ENCODE measurements at regions of chr12 and their contacts with region 1.

Region 1: GRCh38 chr12:117857632-117858612 is 110.9 kb downstream of the KSR2 start:
- DNase-seq: peak; percentile 25
- ATAC-seq: peak; percentile 82
- H3K4me3 ChIP-seq: no peak overlapping the region
- H3K27ac ChIP-seq: no peak overlapping the region
- H3K4me1 ChIP-seq: no peaks in the 10 kb centered on the region
- H3K27me3 ChIP-seq: no peaks in the 10 kb centered on the region; a peak in 1 of 4 replicates
- CTCF ChIP-seq: peak; percentile 55 to 79 (median 65)
- EP300 ChIP-seq: no peak
- POLR2A ChIP-seq: no peak
- RAD21 ChIP-seq: 0 out of 2 replicates have a peak, but pooled peaks have one; percentile 21

Region 2: DNA sequence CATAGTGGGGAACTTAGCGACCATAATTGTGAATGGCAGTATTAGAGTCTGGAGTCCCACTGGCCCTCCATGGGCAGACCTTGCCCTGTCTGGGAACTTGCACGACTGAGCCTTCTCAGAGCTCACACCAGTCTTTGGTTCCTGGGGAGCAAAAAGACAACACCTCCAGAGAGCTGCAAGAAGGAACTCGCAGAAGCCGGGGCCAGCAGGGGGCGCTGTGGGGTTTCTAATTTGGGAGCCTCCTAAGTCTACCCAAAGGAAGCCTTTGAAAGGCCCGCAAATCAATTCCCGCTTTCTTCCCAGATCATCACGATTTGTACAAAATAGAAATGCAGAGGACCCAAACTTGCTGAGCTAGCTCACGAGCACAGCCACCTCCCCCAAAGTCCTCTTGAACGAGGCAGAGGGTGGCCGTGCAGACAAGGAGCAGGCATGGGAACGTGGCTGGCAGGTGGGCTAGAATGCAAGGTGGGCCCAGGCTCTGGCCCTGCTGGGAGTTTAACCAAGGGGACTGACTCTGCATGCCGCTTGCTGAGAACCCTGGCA is 621.4 kb before region 1 on chr12:
- CTCF ChIA-PET with region 1: interaction called, 12 read pairs
- POLR2A ChIA-PET with region 1: no interaction called
- RAD21 ChIA-PET with region 1: interaction called, 5 read pairs
- SMC1A ChIA-PET with region 1: no interaction called
- in situ Hi-C with region 1: no loop called
- intact Hi-C with region 1: no loop called
- DNase-seq: no peak
- ATAC-seq: peak; percentile 89
- H3K4me3 ChIP-seq: no peak overlapping the region
- H3K27ac ChIP-seq: no peak overlapping the region
- H3K4me1 ChIP-seq: no peaks in the 10 kb centered on the region
- H3K27me3 ChIP-seq: peaks cover 3 to 6% of the 10 kb centered on the region in 2 experiments; a peak in 3 of 4 replicates
- CTCF ChIP-seq: peak; percentile 70 to 84 (median 78)
- EP300 ChIP-seq: no peak
- POLR2A ChIP-seq: no peak
- RAD21 ChIP-seq: peak; percentile 60

Region 3: DNA sequence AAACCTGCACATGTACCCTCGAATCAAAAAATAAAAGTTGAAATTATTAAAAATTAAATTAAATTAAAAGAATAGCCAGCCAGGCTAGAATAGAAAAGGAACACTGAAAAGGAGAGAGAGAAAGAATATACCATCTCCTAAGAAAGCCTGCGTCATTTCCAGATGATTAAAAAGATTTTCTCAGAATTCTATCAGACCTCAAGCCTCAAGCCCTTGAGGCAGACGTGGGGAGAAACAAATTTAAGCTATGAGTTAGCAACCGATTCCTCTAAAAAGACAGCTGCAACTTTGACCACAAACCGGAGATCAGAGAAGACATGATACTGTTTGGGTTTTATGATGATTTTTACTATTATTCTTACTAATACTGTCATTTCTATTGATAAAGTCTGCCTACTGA is 27.5 kb before region 1 on chr12:
- CTCF ChIA-PET with region 1: interaction called, 14 read pairs
- POLR2A ChIA-PET with region 1: no interaction called
- RAD21 ChIA-PET with region 1: no interaction called
- SMC1A ChIA-PET with region 1: interaction called, 3 read pairs
- in situ Hi-C with region 1: no loop called
- intact Hi-C with region 1: no loop called
- DNase-seq: no peak
- ATAC-seq: no peak
- H3K4me3 ChIP-seq: no peak overlapping the region
- H3K27ac ChIP-seq: no peak overlapping the region
- H3K4me1 ChIP-seq: no peaks in the 10 kb centered on the region
- H3K27me3 ChIP-seq: no peaks in the 10 kb centered on the region; a peak in 1 of 4 replicates
- CTCF ChIP-seq: no peak
- EP300 ChIP-seq: no peak
- POLR2A ChIP-seq: no peak
- RAD21 ChIP-seq: no peak

Region 4: DNA sequence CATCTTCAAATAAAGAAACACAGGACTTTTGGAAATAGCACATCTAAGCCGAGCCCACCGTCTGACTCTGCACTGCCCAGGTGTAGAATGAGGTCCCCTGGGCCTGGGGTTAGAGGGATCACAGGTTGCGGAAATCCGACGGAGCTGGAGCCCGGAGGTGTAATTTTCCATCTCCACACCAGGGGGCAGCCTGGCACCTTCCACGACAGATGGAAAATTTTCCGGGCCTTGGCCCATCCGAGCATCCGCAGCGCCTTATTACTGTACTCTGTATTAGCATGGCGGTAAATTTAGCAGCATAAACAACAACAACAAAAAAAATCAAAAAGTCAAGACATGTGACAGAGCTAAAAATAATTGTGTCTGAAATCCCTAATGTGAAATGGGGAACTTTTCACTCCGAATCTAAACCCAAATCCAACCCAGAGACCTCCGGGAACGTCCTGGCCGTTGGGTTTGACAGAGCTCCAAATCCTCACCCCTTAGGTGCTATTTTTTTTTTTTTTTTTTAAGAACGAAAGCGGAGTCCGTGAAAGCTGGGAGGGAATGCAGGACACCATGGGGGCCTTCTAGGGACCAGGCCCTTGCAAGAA is 17.0 kb after region 1 on chr12:
- CTCF ChIA-PET with region 1: interaction called, 25 read pairs
- POLR2A ChIA-PET with region 1: no interaction called
- RAD21 ChIA-PET with region 1: interaction called, 7 read pairs
- SMC1A ChIA-PET with region 1: interaction called, 6 read pairs
- in situ Hi-C with region 1: no loop called
- intact Hi-C with region 1: no loop called
- DNase-seq: no peak
- ATAC-seq: peak; percentile 90
- H3K4me3 ChIP-seq: no peak overlapping the region
- H3K27ac ChIP-seq: no peak overlapping the region
- H3K4me1 ChIP-seq: no peaks in the 10 kb centered on the region
- H3K27me3 ChIP-seq: no peaks in the 10 kb centered on the region
- CTCF ChIP-seq: peak; percentile 85 to 89 (median 86)
- EP300 ChIP-seq: no peak
- POLR2A ChIP-seq: no peak
- RAD21 ChIP-seq: peak; percentile 89

Region 5: DNA sequence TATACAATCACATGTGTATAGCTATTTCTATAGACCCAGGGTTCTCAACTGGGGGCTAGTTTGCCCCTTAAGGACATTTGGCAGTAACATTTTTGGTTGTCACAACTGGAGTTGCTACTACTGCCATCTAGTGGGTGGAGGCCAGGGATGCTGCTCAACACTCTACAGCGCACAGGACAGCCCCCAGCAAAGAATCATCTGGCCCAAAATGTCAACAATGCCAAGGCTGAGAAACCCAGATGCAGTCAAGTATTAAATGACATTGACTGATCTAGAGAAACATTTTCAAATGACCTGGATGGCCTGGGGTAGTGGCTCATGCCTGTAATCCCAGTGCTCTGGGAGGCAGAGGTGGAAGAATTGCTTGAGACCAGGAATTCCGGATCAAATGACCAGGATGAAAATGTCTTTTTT is 197.2 kb after region 1 on chr12:
- CTCF ChIA-PET with region 1: interaction called, 22 read pairs
- POLR2A ChIA-PET with region 1: no interaction called
- RAD21 ChIA-PET with region 1: interaction called, 5 read pairs
- SMC1A ChIA-PET with region 1: interaction called, 9 read pairs
- in situ Hi-C with region 1: no loop called
- intact Hi-C with region 1: no loop called
- DNase-seq: no peak
- ATAC-seq: peak; percentile 93
- H3K4me3 ChIP-seq: no peak overlapping the region
- H3K27ac ChIP-seq: no peak overlapping the region
- H3K4me1 ChIP-seq: no peaks in the 10 kb centered on the region
- H3K27me3 ChIP-seq: no peaks in the 10 kb centered on the region
- CTCF ChIP-seq: peak; percentile 71 to 73 (median 71)
- EP300 ChIP-seq: no peak
- POLR2A ChIP-seq: no peak
- RAD21 ChIP-seq: peak; percentile 69

Measured in GM12878 (cell line).